ENCODE measurements at regions of chr2 and their contacts with region 1.

Region 1: GRCh38 chr2:119649354-119649917 is 29.6 kb upstream of the TMEM177 start:
- DNase-seq: no peak
- CTCF ChIP-seq: no peak

Region 2: GRCh38 chr2:119659601-119660342 is 10.3 kb after region 1 on chr2:
- CTCF ChIA-PET with region 1: interaction called, 10 read pairs
- POLR2A ChIA-PET with region 1: no interaction called
- DNase-seq: no peak
- CTCF ChIP-seq: peak; percentile 66